ENCODE measurements at regions of chr12 and their contacts with region 1.

Region 1: GRCh38 chr12:127280393-127281275 is 986.3 kb upstream of the TMEM132C start:
- DNase-seq: no peak
- H3K4me3 ChIP-seq: no peak overlapping the region
- H3K27me3 ChIP-seq: no peaks in the 10 kb centered on the region
- CTCF ChIP-seq: peak; percentile 67

Region 2: DNA sequence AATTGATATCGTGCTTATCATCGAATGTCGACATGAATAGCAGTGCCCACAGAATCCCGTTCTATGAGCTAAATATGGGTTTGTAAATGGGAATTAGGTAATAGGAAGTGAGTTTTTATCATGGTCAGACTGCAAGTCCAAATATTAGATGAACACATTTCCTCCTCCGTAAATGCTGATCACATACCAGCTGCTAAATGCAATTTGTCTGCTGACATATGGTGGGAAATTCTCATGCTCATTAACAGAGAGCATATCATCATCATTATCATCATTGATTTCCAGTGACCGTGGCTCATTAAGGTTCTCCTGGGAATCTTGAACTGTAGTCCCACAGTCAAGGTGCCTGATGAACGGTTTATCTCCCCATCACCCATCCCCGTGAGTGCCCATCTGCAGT is 12.4 kb before region 1 on chr12:
- CTCF ChIA-PET with region 1: interaction called, 12 read pairs
- POLR2A ChIA-PET with region 1: no interaction called
- DNase-seq: no peak
- H3K4me3 ChIP-seq: no peak overlapping the region
- H3K27me3 ChIP-seq: no peaks in the 10 kb centered on the region
- CTCF ChIP-seq: no peak

Measured in BJ (cell line).